ENCODE measurements at regions of chr19 and their contacts with region 1.

Region 1: DNA sequence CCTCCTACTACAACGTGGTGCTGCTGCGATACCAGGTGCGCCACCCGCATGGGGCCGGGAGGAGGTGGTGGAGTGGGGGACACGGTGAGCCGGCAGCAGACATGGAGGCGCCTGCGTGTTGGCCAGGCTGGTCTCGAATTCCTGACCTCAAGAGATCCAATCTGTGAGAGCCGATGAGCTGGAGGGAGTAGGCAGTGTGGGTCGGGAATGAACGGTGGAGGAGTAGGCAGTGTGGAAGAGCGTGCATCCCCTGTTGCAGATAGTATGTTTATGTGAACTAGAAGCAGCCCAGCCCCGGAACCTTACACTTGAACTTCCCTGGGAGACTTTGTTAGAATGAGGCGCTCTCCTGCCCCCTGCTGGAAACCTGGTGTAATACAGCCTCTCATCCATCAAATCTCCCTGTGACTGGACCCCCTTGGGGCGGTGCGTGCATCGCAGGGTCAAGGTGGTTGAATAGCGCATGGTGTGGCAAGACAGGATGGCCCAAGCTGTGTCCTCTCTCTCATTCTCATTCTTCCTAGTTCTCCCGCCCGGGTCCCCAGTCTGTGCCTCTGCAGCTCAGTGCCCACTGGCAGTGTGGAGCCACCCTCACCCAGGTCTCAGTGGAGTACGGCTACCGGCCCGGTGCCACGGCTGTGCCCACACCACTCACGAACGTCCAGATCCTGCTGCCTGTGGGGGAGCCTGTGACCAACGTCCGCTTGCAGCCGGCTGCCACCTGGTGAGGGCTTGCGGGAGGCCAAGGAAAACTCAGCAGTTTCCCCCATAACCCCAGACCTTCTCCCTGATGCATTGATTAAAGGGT is 10.5 kb upstream of the B3GNT3 start:
- DNase-seq: no peak
- H3K4me3 ChIP-seq: no peak overlapping the region
- H3K27me3 ChIP-seq: no peaks in the 10 kb centered on the region
- CTCF ChIP-seq: peak; percentile 82

Region 2: GRCh38 chr19:17794731-17795536 is 10.5 kb after region 1 on chr19 and contains the start of gene B3GNT3:
- CTCF ChIA-PET with region 1: interaction called, 10 read pairs
- POLR2A ChIA-PET with region 1: no interaction called
- DNase-seq: no peak
- H3K4me3 ChIP-seq: no peak within 1 kb of the TSS
- H3K27me3 ChIP-seq: peaks cover 10% of the 10 kb centered on the region
- CTCF ChIP-seq: no peak
- polyA plus RNA-seq, gene B3GNT3: not detected in 2 replicates

Region 3: GRCh38 chr19:17841810-17842662 is 57.6 kb after region 1 on chr19:
- CTCF ChIA-PET with region 1: no interaction called
- POLR2A ChIA-PET with region 1: no interaction called
- DNase-seq: no peak
- H3K4me3 ChIP-seq: peak overlapping the region; percentile 35
- H3K27me3 ChIP-seq: no peaks in the 10 kb centered on the region
- CTCF ChIP-seq: no peak

Measured in BJ (cell line).